Thyroid gland (tissue), 4 donors: ENCODE measurements at regions of chr6 and their contacts with region 1.

Region 1: DNA sequence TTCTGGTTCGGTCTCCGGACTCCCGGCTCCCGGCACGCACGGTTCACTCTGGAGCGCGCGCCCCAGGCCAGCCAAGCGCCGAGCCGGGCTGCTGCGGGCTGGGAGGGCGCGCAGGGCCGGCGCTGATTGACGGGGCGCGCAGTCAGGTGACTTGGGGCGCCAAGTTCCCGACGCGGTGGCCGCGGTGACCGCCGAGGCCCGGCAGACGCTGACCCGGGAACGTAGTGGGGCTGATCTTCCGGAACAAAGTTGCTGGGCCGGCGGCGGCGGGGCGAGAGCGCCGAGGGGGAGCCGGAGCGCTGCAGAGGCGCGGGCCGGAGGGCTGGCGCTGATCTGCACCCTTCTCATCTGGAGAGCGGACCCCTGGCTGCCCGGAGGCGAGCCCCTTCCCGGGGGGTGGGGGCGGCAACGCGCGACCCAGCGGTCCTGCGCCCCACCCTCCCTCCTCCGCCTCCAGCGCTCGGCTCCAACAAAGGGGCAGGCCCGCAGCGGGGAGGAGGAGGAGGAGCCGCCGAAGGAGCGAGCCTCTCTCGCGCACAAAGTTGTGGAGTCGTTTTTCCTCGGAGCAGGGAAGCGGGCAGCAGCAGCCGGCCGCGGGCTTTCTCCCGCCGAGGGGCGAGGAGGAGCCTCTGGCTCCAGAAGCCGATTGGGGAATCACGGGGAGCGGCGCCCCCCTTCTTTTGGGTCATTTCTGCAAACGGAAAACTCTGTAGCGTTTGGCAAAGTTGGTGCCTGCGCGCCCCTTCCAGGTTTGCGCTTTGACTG is at the start of gene UTRN:
- DNase-seq: peak; percentile 88
- H3K4me3 ChIP-seq: peak within 1 kb of the TSS; percentile 67 to 83 (median 70)
- H3K27ac ChIP-seq: peak within 1 kb of the TSS; percentile 88 to 99 (median 98)
- H3K4me1 ChIP-seq: peaks cover 10 to 15% of the 10 kb centered on the region in 2 donors
- H3K27me3 ChIP-seq: no peaks in the 10 kb centered on the region
- CTCF ChIP-seq: peak in 1 of 6 experiments; percentile 13
- POLR2A ChIP-seq: peak; percentile 18 to 86
- total RNA-seq, gene UTRN: 383 to 473 (median 415) TPM

Region 2: GRCh38 chr6:144334131-144334708 is 49.3 kb after region 1 on chr6:
- intact Hi-C with region 1: loop called (anchors 10 kb)
- DNase-seq: no peak
- H3K4me3 ChIP-seq: no peak overlapping the region
- H3K27ac ChIP-seq: peak overlapping the region in 2 of 3 donors; percentile 6 to 21
- H3K4me1 ChIP-seq: peaks cover 75 to 82% of the 10 kb centered on the region in 2 donors
- H3K27me3 ChIP-seq: no peaks in the 10 kb centered on the region
- CTCF ChIP-seq: no peak
- POLR2A ChIP-seq: no peak

Region 3: GRCh38 chr6:144667532-144668503 is 382.9 kb after region 1 on chr6:
- intact Hi-C with region 1: no loop called
- DNase-seq: no peak
- H3K4me3 ChIP-seq: no peak overlapping the region
- H3K27ac ChIP-seq: no peak overlapping the region
- H3K4me1 ChIP-seq: peaks cover 16 to 21% of the 10 kb centered on the region in 2 donors
- H3K27me3 ChIP-seq: no peaks in the 10 kb centered on the region
- CTCF ChIP-seq: no peak
- POLR2A ChIP-seq: no peak